Mammary epithelial cell (primary cell): ENCODE measurements at regions of chr12 and their contacts with region 1.

Region 1: DNA sequence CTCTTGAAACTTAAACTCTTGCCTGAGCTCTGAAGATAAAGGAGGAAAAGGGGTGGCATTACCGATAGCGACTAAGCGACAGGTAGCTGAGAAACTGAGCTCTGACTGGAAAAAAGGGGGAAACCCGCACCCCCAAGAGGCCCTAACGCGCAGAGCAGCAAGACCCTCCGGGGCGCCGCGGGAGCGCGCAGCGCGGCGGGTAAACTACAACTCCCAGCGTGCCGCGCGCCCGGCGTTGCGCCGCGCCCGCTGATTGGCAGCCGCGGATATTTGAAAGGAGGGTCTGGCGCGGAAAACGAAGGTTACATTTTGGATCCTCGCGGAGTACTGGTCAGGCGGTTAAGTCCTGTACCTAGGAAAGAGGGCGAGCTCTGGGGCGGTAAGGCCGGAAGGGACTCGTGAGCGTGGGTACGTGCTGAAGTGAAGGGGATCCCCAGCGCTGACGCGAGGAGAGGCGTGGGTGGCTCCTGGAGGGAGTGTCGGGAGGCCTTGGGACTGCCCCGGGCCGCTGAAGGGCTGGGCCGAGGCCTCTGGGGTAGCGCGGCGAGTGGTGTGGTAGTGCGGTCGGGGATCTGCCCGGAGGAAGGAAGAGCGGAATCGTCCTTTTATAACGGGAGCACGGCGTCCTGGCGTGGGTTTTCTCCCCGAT is at the start of gene ESPL1:
- DNase-seq: peak; percentile 83
- H3K4me3 ChIP-seq: peak within 1 kb of the TSS; percentile 88 to 98 (median 96)
- H3K27ac ChIP-seq: peak within 1 kb of the TSS; percentile 91
- H3K4me1 ChIP-seq: peaks cover 18% of the 10 kb centered on the region
- H3K27me3 ChIP-seq: no peaks in the 10 kb centered on the region
- CTCF ChIP-seq: peak; percentile 13 to 15
- total RNA-seq, gene ESPL1: 0.67 to 19.7 TPM

Region 2: GRCh38 chr12:53131844-53132243 is 136.3 kb before region 1 on chr12:
- CTCF ChIA-PET with region 1: no interaction called
- dilution Hi-C with region 1: loop called (anchors 10 kb)
- in situ Hi-C with region 1: no loop called
- intact Hi-C with region 1: no loop called
- DNase-seq: no peak
- H3K4me3 ChIP-seq: no peak overlapping the region
- H3K27ac ChIP-seq: no peak overlapping the region
- H3K4me1 ChIP-seq: no peaks in the 10 kb centered on the region
- H3K27me3 ChIP-seq: no peaks in the 10 kb centered on the region
- CTCF ChIP-seq: no peak

Region 3: GRCh38 chr12:53295070-53295890 is 27.2 kb after region 1 on chr12 and contains the start of gene PFDN5:
- CTCF ChIA-PET with region 1: no interaction called
- dilution Hi-C with region 1: no loop called
- in situ Hi-C with region 1: no loop called
- intact Hi-C with region 1: no loop called
- DNase-seq: peak; percentile 83
- H3K4me3 ChIP-seq: peak within 1 kb of the TSS; percentile 33 to 68 (median 58)
- H3K27ac ChIP-seq: peak within 1 kb of the TSS; percentile 58
- H3K4me1 ChIP-seq: peaks cover 25% of the 10 kb centered on the region
- H3K27me3 ChIP-seq: no peaks in the 10 kb centered on the region
- CTCF ChIP-seq: no peak
- total RNA-seq, gene PFDN5: 162 to 187 TPM